Right ventricle myocardium inferior (tissue), 1 donor: ENCODE measurements at regions of chr6 and their contacts with region 1.

Region 1: GRCh38 chr6:17470938-17471327 is 77.5 kb downstream of the CAP2 start:
- DNase-seq: no peak
- ATAC-seq: no peak

Region 2: DNA sequence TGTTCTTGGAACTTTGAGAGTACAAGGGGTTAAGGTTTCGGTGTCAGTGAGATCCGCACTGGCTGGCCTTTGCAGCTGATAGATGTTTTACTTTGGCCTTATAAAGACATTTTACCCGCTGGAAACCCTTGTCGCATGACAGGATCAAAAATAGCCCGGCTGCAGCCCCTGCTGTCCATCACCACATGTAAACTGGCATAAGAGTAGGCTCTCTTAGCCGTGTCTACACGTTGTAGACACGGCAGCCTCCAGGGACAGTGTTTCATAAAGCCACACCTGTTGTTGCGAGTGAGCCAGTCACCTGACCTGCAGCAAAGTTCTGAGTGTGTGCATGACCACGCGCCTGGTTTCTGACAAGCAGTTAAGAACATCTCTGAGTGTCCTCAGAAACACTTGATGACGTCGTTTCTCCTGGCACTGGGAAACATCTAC is 181.3 kb before region 1 on chr6:
- intact Hi-C with region 1: loop called (anchors 5 kb)
- DNase-seq: peak; percentile 79
- ATAC-seq: peak; percentile 93